ENCODE measurements at regions of chr19 and their contacts with region 1.

Region 1: DNA sequence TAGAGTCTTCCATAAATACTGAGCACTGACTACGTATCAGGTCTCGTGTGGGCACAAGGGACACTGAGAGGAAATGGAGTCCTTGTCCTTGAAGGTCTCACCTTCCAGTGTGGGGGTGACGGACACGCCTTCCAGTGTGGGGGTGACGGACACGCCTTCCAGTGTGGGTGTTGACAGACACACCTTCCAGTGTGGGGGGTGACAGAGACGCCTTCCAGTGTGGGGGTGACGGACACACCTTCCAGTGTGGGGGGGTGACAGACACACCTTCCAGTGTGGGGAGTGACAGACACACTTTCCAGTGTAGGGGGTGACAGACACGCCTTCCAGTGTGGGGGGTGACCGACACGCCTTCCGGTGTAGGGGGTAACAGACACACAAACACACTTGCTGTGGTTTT is 14.3 kb upstream of the EDDM13 start:
- DNase-seq: no peak
- ATAC-seq: no peak
- H3K4me3 ChIP-seq: no peak overlapping the region
- H3K27ac ChIP-seq: no peak overlapping the region
- H3K4me1 ChIP-seq: no peaks in the 10 kb centered on the region
- H3K27me3 ChIP-seq: no peaks in the 10 kb centered on the region

Region 2: GRCh38 chr19:56350416-56351045 is 92.3 kb after region 1 on chr19:
- intact Hi-C with region 1: loop called in 2 of 4 experiments (anchors 5 kb)
- DNase-seq: peak in 1 of 3 donors; percentile 48
- ATAC-seq: peak in 1 of 2 donors; percentile 55
- H3K4me3 ChIP-seq: no peak overlapping the region
- H3K27ac ChIP-seq: no peak overlapping the region
- H3K4me1 ChIP-seq: no peaks in the 10 kb centered on the region
- H3K27me3 ChIP-seq: no peaks in the 10 kb centered on the region

Measured in right cardiac atrium (tissue), 5 donors.